ENCODE measurements at regions of chr2 and their contacts with region 1.

Region 1: GRCh38 chr2:227238238-227239237 is 74.1 kb downstream of the COL4A3 start:
- DNase-seq: no peak
- ATAC-seq: no peak

Region 2: DNA sequence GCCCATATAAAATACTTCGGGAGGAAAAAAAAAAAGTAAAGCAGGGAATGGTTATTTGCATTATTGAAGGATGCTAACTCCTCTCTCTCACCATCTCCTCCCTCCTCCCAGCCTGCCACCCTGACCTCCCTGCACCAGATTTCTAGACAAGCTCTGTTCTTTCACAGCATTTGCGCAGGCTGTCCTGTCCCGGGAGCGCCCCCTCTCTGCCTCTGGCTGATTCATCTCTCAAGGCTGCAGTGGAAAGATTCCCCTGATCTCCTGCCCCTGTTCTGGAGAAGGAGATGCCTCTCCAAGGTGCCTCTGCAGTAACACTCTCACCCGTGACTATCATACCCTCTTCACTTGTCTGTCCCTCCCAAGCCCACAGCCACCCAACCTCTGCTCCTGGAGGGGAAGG is 113.0 kb before region 1 on chr2:
- intact Hi-C with region 1: loop called (anchors 1 kb)
- DNase-seq: no peak
- ATAC-seq: no peak

Region 3: DNA sequence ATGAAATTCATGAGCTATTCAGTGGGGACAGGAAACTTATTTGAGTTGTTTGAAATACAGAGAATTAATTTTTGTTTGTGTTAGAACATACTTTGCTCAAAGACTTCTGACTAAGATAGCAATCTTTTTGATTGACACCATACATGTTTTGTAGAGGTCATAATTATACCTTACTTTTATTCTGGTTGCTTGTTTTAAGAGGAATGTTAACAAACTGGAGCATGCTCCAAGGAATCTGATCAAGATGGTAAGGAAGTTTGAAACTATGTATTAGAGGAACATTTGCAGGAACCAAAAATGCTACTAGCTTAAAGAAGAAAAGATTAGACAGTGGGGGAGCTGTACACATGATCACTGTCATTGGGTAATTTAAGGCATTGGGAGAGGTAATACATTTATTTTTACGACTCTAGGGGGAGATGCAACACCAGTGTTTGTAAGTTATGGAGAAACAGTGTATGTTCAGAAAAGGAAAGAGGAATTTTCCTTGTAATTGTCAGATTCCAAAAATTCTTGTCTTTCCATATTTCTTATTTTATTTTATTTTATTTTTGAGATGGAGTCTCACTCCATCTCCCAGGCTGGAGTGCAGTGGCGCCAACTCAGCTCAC is 241.4 kb after region 1 on chr2:
- intact Hi-C with region 1: no loop called
- DNase-seq: no peak
- ATAC-seq: peak; percentile 65

Measured in Right ventricle myocardium inferior (tissue), 1 donor.